ENCODE measurements at regions of chr1 and their contacts with region 1.

Region 1: GRCh38 chr1:26811057-26811456 is 15.4 kb upstream of the ZDHHC18 start:
- DNase-seq: no peak
- ATAC-seq: no peak
- H3K4me3 Mint-ChIP-seq: no peak overlapping the region
- H3K27ac Mint-ChIP-seq: no peak overlapping the region
- H3K4me1 Mint-ChIP-seq: peaks cover 4% of the 10 kb centered on the region
- H3K27me3 Mint-ChIP-seq: peaks cover 1% of the 10 kb centered on the region
- CTCF ChIP-seq: no peak

Region 2: GRCh38 chr1:25796811-25797458 is 1014.1 kb before region 1 on chr1:
- CTCF ChIA-PET with region 1: no interaction called
- POLR2A ChIA-PET with region 1: no interaction called
- intact Hi-C with region 1: no loop called
- DNase-seq: peak; percentile 36
- ATAC-seq: peak; percentile 32
- H3K4me3 Mint-ChIP-seq: peak overlapping the region; percentile 4
- H3K27ac Mint-ChIP-seq: no peak overlapping the region
- H3K4me1 Mint-ChIP-seq: peaks cover 16% of the 10 kb centered on the region
- H3K27me3 Mint-ChIP-seq: no peaks in the 10 kb centered on the region
- CTCF ChIP-seq: no peak

Region 3: DNA sequence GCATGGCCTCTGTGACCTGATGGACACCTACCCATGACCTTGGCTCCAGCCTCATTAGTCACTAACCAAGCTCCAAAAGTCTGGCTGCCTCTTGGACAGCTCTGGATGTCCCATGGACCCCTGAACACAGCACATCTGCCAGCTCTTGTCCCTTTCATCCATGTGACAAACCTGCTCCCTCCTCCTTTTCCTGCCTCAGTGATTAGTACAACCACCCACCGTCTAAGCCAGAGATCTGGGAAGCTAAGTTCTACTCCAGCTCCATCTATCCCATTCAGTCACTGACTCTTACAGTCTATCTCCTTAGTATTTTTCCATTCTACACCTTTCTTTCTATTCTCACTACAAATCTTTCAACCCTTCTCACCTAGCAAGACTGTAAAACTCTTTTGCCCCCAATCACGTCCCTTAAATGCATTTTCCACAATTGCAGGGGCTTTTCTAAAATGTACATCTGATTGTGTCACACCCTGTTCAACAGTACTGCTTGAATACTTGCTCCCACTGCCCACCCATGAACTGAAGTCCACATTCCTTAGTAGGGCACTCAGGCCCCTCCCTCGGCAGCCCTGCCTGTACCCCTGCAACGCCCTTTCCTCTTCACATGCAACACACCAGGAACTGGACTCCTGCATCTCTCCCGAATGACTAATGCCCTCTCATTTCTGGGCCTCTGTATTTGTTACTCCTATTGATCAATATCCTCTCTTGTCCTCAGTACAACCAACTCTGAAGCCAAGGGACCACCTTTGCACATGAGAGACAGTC is 71.8 kb after region 1 on chr1:
- CTCF ChIA-PET with region 1: interaction called, 40 read pairs
- POLR2A ChIA-PET with region 1: no interaction called
- intact Hi-C with region 1: loop called (anchors 1 kb)
- DNase-seq: no peak
- ATAC-seq: no peak
- H3K4me3 Mint-ChIP-seq: no peak overlapping the region
- H3K27ac Mint-ChIP-seq: no peak overlapping the region
- H3K4me1 Mint-ChIP-seq: peaks cover 6% of the 10 kb centered on the region
- H3K27me3 Mint-ChIP-seq: no peaks in the 10 kb centered on the region
- CTCF ChIP-seq: no peak